PC-9 (cell line): ENCODE measurements at regions of chr5 and their contacts with region 1.

Region 1: GRCh38 chr5:137735555-137736284 is at the start of gene KLHL3:
- DNase-seq: peak; percentile 48 to 61
- H3K4me3 ChIP-seq: peak within 1 kb of the TSS; percentile 51; the same call in 1 of the 2 replicates
- H3K27ac ChIP-seq: peak within 1 kb of the TSS; percentile 81
- H3K4me1 ChIP-seq: peaks cover 52% of the 10 kb centered on the region
- H3K27me3 ChIP-seq: no peaks in the 10 kb centered on the region
- CTCF ChIP-seq: no peak; the same call in 1 of the 2 replicates
- total RNA-seq, gene KLHL3: 13.6 and 15.2 TPM in 2 replicates

Region 2: DNA sequence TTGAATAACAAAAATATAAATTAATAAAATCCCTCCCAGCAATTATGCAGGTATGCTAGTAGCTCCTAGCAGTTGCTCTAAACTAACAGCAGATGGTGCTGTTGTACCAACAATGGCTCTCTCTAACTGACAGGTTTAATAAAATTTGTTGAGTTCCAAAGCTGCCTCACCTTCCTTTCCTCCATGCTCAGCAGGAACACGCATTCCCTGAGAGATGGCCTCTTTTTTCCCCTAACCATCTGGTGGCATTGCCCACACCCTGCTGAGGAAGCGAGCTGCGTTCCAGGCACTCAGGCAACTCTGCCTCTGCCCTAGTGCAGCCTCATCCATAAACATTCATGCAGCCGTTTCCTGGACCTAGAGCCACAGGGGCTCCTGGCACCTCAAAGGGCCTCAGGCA is 106.1 kb before region 1 on chr5:
- CTCF ChIA-PET with region 1: interaction called, 4 read pairs
- POLR2A ChIA-PET with region 1: no interaction called
- intact Hi-C with region 1: loop called (anchors 2 kb)
- DNase-seq: peak in 1 of 2 experiments; percentile 11
- H3K4me3 ChIP-seq: no peak overlapping the region
- H3K27ac ChIP-seq: no peak overlapping the region
- H3K4me1 ChIP-seq: peaks cover 4% of the 10 kb centered on the region; the same call in 1 of the 2 replicates
- H3K27me3 ChIP-seq: no peaks in the 10 kb centered on the region
- CTCF ChIP-seq: peak; percentile 94